Dendritic cell treated with granulocyte-macrophage colony-stimulating factor and Interleukin-4, amounts not matched to agents 40 ng/mL and 50 ng/mL, for 4 days (primary cell): ENCODE measurements at regions of chrX and their contacts with region 1.

Region 1: DNA sequence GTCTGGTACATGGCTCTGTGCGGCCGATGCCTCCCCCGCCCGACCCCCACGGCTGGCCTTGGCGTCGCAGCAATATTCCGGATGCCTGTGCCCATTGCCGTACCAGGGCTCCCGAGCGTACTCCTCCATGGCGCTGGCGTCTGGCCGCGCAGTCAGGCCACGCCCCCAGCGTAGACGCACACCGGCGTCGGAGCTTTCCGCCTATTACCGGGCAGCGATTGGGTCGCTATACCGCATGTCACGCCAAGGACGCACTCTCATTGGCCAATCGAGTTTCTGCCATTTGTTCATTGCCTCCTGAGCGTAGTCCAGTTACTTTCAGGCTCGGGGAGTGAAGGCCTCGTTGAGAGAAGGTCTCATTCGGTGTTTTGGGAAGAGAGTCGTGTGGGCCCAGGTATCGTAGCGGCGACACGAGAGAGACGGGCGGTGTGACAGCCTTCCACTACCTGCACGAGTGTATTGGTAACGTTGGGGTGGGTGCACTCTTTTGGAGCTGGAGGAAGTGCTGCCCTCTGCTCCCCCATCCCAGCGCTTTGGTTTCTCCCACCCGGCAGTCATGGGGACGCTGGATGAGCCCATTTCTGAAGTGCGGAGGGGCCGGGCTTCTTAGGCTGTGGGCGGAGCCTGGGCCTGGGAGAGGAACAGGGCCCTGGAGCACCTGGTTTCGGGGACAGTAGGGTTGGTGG is at the starts of genes PQBP1 and TIMM17B:
- H3K4me3 Mint-ChIP-seq: peak within 1 kb of the TSS; percentile 84
- H3K27ac Mint-ChIP-seq: peak within 1 kb of the TSS; percentile 96
- H3K4me1 Mint-ChIP-seq: peaks cover 25% of the 10 kb centered on the region
- H3K27me3 Mint-ChIP-seq: no peaks in the 10 kb centered on the region

Region 2: GRCh38 chrX:48683411-48683982 is 214.3 kb before region 1 on chrX and contains the start of gene WAS:
- intact Hi-C with region 1: loop called (anchors 2 kb)
- H3K4me3 Mint-ChIP-seq: peak within 1 kb of the TSS; percentile 99
- H3K27ac Mint-ChIP-seq: peak within 1 kb of the TSS; percentile 99
- H3K4me1 Mint-ChIP-seq: peaks cover 80% of the 10 kb centered on the region
- H3K27me3 Mint-ChIP-seq: no peaks in the 10 kb centered on the region

Region 3: GRCh38 chrX:48957827-48958634 is 60.3 kb after region 1 on chrX:
- intact Hi-C with region 1: loop called (anchors 5 kb)
- H3K4me3 Mint-ChIP-seq: peak overlapping the region; percentile 98
- H3K27ac Mint-ChIP-seq: peak overlapping the region; percentile 100
- H3K4me1 Mint-ChIP-seq: peaks cover 47% of the 10 kb centered on the region
- H3K27me3 Mint-ChIP-seq: no peaks in the 10 kb centered on the region

Region 4: GRCh38 chrX:49073601-49074571 is 176.1 kb after region 1 on chrX and contains the start of gene PRAF2:
- intact Hi-C with region 1: no loop called
- H3K4me3 Mint-ChIP-seq: peak within 1 kb of the TSS; percentile 72
- H3K27ac Mint-ChIP-seq: peak within 1 kb of the TSS; percentile 72
- H3K4me1 Mint-ChIP-seq: peaks cover 20% of the 10 kb centered on the region
- H3K27me3 Mint-ChIP-seq: peaks cover 17% of the 10 kb centered on the region